ENCODE measurements at regions of chr9 and their contacts with region 1.

Region 1: DNA sequence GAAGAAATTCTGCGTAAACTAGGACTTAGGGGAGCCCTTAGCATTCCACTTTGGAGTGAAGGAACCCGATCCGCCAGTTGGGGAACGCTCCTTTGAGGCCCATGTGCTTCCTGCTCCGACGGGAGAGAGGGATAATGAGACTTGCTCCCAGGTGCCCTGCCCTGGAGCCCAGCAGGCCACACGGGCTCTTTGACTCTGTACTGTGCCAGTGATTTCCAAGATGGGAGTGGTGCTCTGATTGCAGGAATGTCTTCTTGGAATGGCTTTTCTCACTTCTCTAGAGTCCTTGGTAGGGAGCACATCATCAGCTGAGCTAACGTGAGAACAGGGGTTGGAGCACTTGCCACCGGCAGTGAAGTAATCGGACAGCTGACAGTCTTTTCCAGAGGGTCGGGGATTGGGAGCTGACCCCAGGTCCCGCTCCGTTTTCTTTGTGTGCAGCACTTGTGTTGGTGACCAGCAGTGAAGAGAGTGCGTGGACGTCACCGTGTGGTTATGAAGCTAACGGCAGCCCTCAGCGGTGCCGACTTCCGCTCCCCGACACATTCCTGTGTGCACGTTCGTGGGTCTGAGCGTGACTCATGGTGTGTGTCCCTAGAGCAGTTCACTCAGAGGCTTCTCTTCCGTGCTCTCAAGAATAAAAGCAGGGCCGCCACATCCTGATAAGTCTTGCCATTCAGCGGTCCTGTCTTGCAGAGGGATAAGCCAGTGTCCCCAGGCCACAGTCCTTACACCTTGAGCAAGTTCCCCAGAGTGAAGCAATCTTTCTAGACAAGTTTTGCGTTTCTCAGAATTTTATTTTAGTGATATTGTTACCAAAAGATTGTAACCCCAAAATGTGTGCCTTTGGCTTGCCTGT is 25.6 kb downstream of the ABL1 start:
- DNase-seq: peak; percentile 96
- H3K4me3 ChIP-seq: no peak overlapping the region
- H3K27ac ChIP-seq: peak overlapping the region; percentile 88 to 94 (median 93)
- H3K4me1 ChIP-seq: peaks cover 41 to 50% of the 10 kb centered on the region in 2 donors
- H3K27me3 ChIP-seq: no peaks in the 10 kb centered on the region
- CTCF ChIP-seq: peak in 4 of 6 experiments; percentile 38 to 57 (median 50)
- POLR2A ChIP-seq: peak in 1 of 2 donors; percentile 42

Region 2: DNA sequence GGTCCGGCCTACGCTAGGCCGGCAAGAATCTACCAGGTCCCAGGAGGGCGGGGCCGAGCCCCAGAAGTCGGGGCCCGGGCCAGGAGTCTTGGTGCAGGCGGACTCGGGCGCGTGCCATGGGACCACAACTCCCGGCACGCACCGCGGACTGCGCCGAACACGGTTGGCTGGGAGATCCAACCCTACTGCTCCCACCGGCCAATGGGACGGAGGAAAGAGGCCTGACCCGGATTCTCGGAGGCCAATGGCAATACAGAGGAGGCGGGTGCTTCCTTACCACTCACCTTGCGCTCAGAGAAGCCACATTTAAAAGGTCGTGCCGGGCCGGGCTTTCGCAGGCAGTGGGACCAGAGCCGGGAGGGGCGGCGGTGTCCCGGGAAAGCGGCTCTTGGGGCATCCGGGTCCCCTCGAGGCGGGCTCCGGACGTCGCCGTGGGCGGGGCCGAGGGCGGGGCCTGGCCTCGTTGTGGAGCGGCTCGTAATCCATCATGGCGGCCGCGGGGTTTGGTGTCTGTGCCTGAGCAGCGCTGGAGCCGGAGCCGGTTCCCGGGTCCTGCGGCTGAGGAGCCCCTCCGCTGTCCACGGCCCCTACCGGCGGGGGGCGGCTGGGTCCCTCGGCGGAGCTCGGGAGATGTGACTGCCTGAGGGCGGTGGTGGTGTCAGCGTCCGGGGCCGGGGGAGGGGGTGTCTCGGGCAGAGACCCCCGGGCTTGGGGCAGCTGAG is 148.0 kb before region 1 on chr9:
- intact Hi-C with region 1: loop called (anchors 5 kb)
- DNase-seq: peak; percentile 99 to 100
- H3K4me3 ChIP-seq: peak overlapping the region; percentile 51 to 93 (median 87)
- H3K27ac ChIP-seq: peak overlapping the region; percentile 84 to 98 (median 96)
- H3K4me1 ChIP-seq: peaks cover 17 to 19% of the 10 kb centered on the region in 2 donors
- H3K27me3 ChIP-seq: no peaks in the 10 kb centered on the region
- CTCF ChIP-seq: no peak
- POLR2A ChIP-seq: peak; percentile 74 to 91

Measured in thyroid gland (tissue), 4 donors.